Vagina (tissue), 2 donors: ENCODE measurements at regions of chr3 and their contacts with region 1.

Region 1: DNA sequence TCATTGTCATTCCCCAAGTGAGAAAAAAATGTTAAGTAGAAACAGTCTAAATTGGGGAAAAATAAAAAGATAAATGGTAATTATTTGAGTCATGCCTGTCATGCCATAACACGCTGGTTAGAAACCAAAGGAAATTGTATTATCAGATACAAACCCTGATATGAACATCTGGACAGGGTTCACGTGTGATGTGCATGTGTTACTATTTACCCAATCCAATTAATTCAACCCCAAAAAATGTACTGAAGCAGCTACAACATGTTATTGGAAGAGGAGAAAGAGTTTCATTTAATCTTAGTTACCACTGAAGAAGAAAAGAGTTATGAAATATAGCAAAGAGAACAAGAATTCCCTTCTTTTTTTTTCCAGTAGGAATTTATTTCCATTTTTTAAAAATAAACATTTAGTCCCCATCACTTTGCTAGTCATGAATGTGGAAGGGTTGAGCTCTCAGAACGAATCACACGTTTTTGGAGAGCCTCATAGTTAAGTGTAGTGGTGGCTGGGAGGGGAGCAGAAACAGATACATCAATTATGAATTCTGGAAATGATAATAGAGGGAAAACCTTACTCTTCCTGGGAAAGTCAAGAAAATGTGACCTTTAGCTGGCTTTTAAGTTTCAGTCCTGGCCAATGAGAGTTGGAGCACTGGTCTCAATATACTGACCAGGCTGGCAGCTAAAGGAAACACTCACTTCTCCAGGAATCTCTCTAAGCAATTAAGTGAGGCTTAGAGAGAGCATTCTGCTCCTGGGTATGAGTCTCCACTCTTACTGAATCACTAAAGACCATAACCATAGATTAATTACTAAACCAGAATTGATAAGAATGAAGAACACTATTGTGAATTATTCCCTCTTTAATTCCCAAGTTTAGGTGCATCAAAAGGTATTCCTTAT is 796.5 kb downstream of the GRM7 start:
- DNase-seq: no peak
- H3K4me3 ChIP-seq: no peak overlapping the region
- H3K27ac ChIP-seq: no peak overlapping the region
- H3K4me1 ChIP-seq: no peaks in the 10 kb centered on the region
- H3K27me3 ChIP-seq: no peaks in the 10 kb centered on the region
- CTCF ChIP-seq: no peak
- POLR2A ChIP-seq: no peak

Region 2: DNA sequence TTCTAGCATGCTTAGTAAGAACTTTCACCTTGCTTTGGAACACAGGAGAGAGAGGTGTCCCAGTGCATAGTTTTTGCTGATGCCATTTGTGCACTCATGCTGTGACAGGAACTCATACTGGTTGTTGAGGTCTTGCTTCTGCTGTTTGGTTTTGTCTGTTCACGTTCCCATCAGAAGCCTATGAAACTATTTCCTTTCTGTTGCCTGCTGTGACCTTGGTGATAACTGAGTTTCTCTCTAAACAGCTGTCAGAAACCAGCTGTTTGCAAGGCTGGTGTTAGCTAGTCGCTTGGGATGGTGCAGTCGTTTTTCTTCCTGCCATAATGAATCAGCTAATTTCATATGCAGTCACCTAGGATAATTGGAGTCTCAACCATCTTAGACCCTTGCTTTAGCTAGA is 72.4 kb before region 1 on chr3:
- intact Hi-C with region 1: no loop called
- DNase-seq: no peak
- H3K4me3 ChIP-seq: no peak overlapping the region
- H3K27ac ChIP-seq: no peak overlapping the region
- H3K4me1 ChIP-seq: no peaks in the 10 kb centered on the region
- H3K27me3 ChIP-seq: no peaks in the 10 kb centered on the region
- CTCF ChIP-seq: no peak
- POLR2A ChIP-seq: no peak

Region 3: DNA sequence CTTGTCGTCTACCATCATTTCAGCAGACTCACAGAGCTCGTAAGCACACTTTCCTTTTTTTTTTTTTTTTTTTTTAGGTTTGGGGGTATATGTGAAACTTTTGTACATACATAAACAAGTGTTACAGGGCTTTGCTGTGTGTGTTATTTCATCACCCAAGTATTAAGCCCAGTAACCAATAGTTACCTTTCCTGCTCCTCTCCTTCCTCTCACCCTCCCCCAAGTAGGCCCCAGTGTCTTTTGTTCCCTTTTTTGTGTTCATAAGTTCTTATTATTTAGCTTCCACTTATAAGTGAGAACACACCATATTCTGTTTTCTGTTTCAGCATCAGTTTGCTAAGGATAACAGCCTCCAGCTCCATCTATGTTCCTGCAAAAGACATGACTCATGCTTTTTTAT is 49.8 kb before region 1 on chr3:
- intact Hi-C with region 1: loop called (anchors 2 kb)
- DNase-seq: no peak
- H3K4me3 ChIP-seq: no peak overlapping the region
- H3K27ac ChIP-seq: no peak overlapping the region
- H3K4me1 ChIP-seq: no peaks in the 10 kb centered on the region
- H3K27me3 ChIP-seq: no peaks in the 10 kb centered on the region
- CTCF ChIP-seq: no peak
- POLR2A ChIP-seq: no peak